Mammary epithelial cell (primary cell): ENCODE measurements at regions of chr3 and their contacts with region 1.

Region 1: GRCh38 chr3:18295171-18295920 is 129.8 kb downstream of the SATB1 start:
- DNase-seq: peak; percentile 82
- H3K4me3 ChIP-seq: no peak overlapping the region
- H3K27ac ChIP-seq: peak overlapping the region; percentile 50
- H3K4me1 ChIP-seq: peaks cover 6% of the 10 kb centered on the region
- H3K27me3 ChIP-seq: no peaks in the 10 kb centered on the region
- CTCF ChIP-seq: peak; percentile 97 to 98

Region 2: GRCh38 chr3:17645072-17645698 is 650.2 kb before region 1 on chr3:
- CTCF ChIA-PET with region 1: no interaction called
- dilution Hi-C with region 1: no loop called
- in situ Hi-C with region 1: no loop called
- intact Hi-C with region 1: loop called (anchors 1 kb)
- DNase-seq: peak; percentile 55
- H3K4me3 ChIP-seq: no peak overlapping the region
- H3K27ac ChIP-seq: no peak overlapping the region
- H3K4me1 ChIP-seq: peaks cover 2% of the 10 kb centered on the region
- H3K27me3 ChIP-seq: no peaks in the 10 kb centered on the region
- CTCF ChIP-seq: peak; percentile 72 to 78

Region 3: DNA sequence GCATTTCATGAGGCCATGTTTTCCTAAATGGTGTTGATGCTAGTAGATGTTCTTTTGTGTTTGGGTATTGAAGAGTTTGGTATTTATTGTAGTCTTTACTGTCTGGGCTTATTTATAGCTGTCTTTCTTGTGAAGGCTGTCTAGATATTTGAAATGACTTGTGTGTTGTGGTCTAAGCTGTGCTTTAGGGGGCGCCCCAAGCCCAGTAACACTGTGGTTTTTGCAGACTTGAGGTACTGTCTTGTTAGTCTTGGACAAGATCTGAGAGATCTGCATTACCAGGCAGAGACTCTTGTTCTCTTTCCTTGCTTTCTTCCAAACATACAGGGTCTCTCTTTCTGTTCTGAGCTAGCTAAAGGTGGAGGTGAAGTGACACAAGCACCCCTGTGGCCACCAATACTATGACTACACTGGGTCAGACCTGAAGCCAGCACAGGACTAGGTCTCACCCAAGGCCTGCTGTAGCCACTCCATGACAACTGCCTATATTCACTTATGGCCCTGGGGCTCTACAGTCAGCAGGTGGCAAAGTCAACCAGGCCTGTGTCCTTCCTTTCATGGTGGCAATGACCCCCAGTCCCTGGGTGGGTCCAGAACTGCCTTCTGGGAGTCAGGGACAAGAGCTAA is 400.8 kb before region 1 on chr3:
- CTCF ChIA-PET with region 1: interaction called, 3 read pairs
- dilution Hi-C with region 1: no loop called
- in situ Hi-C with region 1: no loop called
- intact Hi-C with region 1: loop called (anchors 1 kb)
- DNase-seq: peak; percentile 47
- H3K4me3 ChIP-seq: no peak overlapping the region
- H3K27ac ChIP-seq: no peak overlapping the region
- H3K4me1 ChIP-seq: no peaks in the 10 kb centered on the region
- H3K27me3 ChIP-seq: no peaks in the 10 kb centered on the region
- CTCF ChIP-seq: peak; percentile 50 to 72

Region 4: GRCh38 chr3:17979252-17979651 is 316.1 kb before region 1 on chr3:
- CTCF ChIA-PET with region 1: no interaction called
- dilution Hi-C with region 1: no loop called
- in situ Hi-C with region 1: no loop called
- intact Hi-C with region 1: loop called (anchors 2 kb)
- DNase-seq: no peak
- H3K4me3 ChIP-seq: no peak overlapping the region
- H3K27ac ChIP-seq: no peak overlapping the region
- H3K4me1 ChIP-seq: no peaks in the 10 kb centered on the region
- H3K27me3 ChIP-seq: no peaks in the 10 kb centered on the region
- CTCF ChIP-seq: peak in 1 of 2 donors; percentile 31

Region 5: DNA sequence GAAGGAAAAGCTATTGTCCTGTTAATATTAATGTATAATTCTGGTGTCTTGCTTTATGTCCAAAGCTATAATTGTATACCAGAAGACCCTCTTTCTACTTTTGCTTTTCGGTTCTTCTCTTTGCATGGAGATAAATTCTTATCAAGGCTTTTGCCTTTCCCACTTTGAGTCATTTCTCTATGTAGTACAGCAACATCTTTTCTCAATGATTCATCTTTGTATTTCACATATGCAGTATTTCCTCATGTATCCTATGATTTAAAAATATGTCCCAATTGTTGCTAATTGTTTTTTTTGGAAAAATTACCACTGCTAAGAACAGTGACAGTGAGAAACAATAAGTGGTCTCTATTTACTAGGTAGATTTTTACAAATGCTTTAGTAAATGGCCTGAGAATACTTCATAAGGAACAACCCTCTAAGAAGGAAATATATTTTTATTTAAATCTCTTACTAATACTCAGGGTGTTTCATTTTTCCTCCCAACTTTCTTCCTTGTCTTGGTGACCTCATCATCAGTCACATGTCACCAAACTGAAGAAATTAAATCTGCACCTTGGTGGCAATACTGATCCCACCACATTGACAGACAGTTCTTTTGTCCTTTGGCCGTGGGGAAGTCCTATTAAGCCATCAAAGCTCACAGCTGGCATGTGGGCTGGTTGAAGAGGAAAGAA is 160.8 kb before region 1 on chr3:
- CTCF ChIA-PET with region 1: no interaction called
- dilution Hi-C with region 1: no loop called
- in situ Hi-C with region 1: no loop called
- intact Hi-C with region 1: loop called (anchors 1 kb)
- DNase-seq: peak; percentile 63
- H3K4me3 ChIP-seq: no peak overlapping the region
- H3K27ac ChIP-seq: peak overlapping the region; percentile 89
- H3K4me1 ChIP-seq: peaks cover 23% of the 10 kb centered on the region
- H3K27me3 ChIP-seq: no peaks in the 10 kb centered on the region
- CTCF ChIP-seq: no peak

Region 6: DNA sequence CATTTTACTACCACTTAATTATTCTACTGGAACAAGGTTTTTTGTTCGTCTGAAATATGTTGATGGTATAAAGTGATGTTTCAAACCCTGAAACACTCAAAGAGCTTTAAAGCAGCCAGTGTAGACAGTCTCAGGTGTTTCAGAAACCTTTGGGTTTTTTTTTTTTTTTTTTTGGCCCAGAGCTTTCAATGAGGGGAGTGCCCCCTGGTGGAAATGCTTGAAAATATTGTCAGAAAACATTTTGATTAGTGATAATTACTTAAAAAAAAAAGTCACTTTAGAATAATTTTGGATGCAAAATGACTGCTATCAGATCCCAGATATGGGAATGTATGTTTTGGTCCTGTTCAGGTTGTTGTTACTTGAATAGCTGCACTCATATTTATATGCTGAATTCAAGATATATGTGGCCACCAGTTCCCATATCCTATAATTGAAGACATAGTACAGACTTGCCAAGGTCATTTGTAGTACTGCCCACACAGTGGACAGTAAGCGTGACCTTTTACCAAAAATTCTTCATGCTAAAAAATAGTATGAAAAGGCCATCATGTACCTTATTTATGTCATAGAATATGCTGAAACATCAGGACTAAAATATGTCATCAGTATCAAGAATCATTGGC is 93.9 kb after region 1 on chr3:
- CTCF ChIA-PET with region 1: interaction called, 3 read pairs
- dilution Hi-C with region 1: no loop called
- in situ Hi-C with region 1: no loop called
- intact Hi-C with region 1: loop called (anchors 1 kb)
- DNase-seq: peak; percentile 8
- H3K4me3 ChIP-seq: no peak overlapping the region
- H3K27ac ChIP-seq: no peak overlapping the region
- H3K4me1 ChIP-seq: no peaks in the 10 kb centered on the region
- H3K27me3 ChIP-seq: no peaks in the 10 kb centered on the region
- CTCF ChIP-seq: peak; percentile 26 to 61